WTC11 (cell line): ENCODE measurements at regions of chr15 and their contacts with region 1.

Region 1: GRCh38 chr15:66707310-66708082 is 5.5 kb downstream of the SMAD6 start:
- DNase-seq: peak; percentile 69
- ATAC-seq: peak; percentile 84
- H3K4me3 Mint-ChIP-seq: no peak overlapping the region
- H3K27ac Mint-ChIP-seq: no peak overlapping the region
- H3K4me1 Mint-ChIP-seq: peaks cover 34% of the 10 kb centered on the region
- H3K27me3 Mint-ChIP-seq: peaks cover 23% of the 10 kb centered on the region
- CTCF ChIP-seq: no peak

Region 2: DNA sequence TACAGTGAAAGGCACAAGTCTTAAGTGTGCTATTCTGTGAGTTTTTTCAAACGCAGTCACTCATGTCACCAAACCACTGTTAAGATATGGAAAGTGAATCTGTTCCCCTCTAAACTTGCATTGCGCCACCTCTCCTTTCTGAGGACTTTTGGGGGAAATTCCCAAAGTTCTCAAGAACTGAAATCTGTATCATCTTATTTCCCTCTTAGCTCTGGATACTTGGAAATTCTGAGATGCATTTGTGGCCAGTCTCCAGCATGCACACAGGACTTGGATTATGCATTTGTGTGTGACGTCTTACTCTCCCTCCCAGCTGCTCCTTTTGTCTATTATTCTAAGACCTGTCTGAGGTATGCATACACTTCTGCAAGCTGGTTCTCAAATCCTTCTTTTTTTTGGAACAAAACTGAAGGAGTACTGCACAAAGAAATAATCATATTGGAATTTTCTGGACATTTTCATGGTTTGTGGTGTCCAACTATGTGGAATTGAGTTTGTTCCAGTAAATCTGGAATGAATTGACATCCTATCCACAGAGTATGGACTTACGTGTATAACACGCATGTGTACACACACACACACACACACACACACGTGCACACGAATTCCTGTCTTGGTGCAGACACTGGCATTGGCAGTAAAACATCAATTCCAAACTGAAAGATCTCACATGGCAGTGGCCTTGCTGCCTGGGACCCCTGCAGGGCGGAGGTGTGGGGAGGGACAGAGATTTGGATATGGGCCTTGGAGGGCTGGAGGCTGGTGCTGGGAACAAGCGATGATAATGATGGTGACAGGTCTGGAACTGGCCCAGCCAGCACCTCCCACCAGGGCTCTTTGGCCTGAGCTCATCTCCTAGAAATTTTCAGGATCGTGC is 133.5 kb before region 1 on chr15:
- CTCF ChIA-PET with region 1: no interaction called
- POLR2A ChIA-PET with region 1: no interaction called
- DNase-seq: no peak
- ATAC-seq: no peak
- H3K4me3 Mint-ChIP-seq: no peak overlapping the region
- H3K27ac Mint-ChIP-seq: no peak overlapping the region
- H3K4me1 Mint-ChIP-seq: no peaks in the 10 kb centered on the region
- H3K27me3 Mint-ChIP-seq: no peaks in the 10 kb centered on the region
- CTCF ChIP-seq: no peak

Region 3: DNA sequence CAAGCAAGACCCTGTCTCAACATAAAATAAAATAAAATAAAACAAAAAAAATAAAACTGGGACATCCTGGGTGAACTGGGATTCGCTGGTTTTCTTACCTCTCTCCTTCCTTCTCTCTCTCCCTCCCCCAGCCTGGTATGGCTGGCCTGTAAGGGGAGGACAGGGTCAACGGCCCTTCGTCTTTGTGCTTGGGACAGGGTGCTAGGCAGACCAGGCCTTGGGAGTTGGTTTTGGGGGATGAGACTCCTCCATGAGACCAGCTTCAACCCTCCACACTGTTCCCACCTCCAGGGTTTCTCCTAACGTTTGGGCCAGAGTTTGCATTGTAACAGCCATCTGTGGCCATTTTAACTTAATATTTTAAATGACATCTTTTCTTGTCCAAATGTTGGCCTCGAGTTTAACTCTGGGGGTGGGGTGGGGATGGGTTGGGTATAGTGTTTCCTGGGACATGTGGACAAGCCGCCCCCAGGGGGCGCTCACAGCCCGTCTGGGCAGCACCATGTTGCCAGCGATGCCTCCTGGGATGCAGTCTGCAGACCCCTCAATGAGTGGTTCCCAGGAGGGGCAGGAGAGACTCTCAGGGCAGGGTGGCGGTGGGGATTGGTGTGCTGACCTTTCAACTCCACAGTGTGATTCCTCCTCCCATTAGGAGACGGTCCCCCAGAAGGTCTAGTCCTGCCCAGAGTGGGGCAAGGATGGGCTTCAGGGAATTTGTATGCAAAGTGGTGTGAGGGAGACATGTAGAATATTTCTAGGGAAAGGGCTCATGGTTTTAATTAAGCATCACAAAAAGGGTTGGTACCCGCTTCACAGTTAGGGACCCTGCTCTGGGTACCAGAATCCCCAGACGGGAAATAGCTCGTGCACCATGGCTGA is 104.0 kb before region 1 on chr15:
- CTCF ChIA-PET with region 1: interaction called, 10 read pairs
- POLR2A ChIA-PET with region 1: interaction called, 3 read pairs
- DNase-seq: peak; percentile 82
- ATAC-seq: peak; percentile 95
- H3K4me3 Mint-ChIP-seq: no peak overlapping the region
- H3K27ac Mint-ChIP-seq: no peak overlapping the region; the same call in 1 of the 2 replicates
- H3K4me1 Mint-ChIP-seq: no peaks in the 10 kb centered on the region
- H3K27me3 Mint-ChIP-seq: no peaks in the 10 kb centered on the region
- CTCF ChIP-seq: peak; percentile 95

Region 4: GRCh38 chr15:66654739-66655375 is 52.6 kb before region 1 on chr15:
- CTCF ChIA-PET with region 1: no interaction called
- POLR2A ChIA-PET with region 1: no interaction called
- DNase-seq: no peak
- ATAC-seq: peak; percentile 25
- H3K4me3 Mint-ChIP-seq: peak overlapping the region; percentile 33; the same call in 1 of the 2 replicates
- H3K27ac Mint-ChIP-seq: no peak overlapping the region
- H3K4me1 Mint-ChIP-seq: peaks cover 45% of the 10 kb centered on the region
- H3K27me3 Mint-ChIP-seq: peaks cover 3% of the 10 kb centered on the region; the same call in 1 of the 2 replicates
- CTCF ChIP-seq: no peak

Region 5: DNA sequence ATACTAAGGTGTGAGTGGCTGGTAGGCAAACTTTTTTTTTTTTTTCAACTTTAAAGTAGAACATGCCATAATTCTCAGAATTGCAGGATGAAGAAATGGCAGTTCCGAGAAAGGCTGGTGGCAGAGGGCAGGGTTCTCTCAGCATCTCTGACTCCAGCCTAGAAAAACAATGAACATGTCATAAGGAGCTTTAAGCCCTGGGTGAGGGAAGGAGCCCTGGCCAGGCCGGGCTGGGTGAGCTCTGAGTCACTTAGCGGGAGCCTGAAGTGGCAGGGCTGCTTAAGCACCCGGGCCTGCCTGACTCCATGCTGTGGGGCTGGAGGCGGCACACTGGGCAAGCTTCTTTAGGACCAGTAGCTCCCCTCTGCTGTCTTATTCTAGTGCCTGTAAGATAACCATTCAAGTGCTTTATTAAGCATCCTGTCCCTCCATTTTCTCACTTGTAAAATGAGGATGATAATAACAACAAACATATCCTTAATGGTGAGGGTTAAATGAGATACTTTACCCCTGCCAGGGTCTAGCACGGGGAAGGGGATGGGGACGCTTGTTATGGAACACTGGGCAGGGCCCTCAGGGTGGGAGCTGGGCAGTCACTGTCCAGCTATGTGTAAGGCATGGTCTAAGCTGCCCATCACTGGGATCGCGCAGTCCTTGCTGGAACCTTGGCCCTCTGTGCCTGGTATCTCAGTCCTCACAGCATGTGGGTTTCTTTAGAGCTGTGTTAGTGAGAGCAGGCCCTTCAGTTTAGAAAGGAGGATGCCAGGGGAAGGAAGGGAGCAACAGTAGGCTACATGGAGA is 12.9 kb after region 1 on chr15:
- CTCF ChIA-PET with region 1: interaction called, 22 read pairs
- POLR2A ChIA-PET with region 1: no interaction called
- DNase-seq: no peak
- ATAC-seq: no peak
- H3K4me3 Mint-ChIP-seq: no peak overlapping the region
- H3K27ac Mint-ChIP-seq: no peak overlapping the region
- H3K4me1 Mint-ChIP-seq: peaks cover 9% of the 10 kb centered on the region
- H3K27me3 Mint-ChIP-seq: no peaks in the 10 kb centered on the region
- CTCF ChIP-seq: no peak

Region 6: GRCh38 chr15:66774001-66774814 is 66.7 kb after region 1 on chr15:
- CTCF ChIA-PET with region 1: interaction called, 53 read pairs
- POLR2A ChIA-PET with region 1: interaction called, 3 read pairs
- DNase-seq: peak; percentile 92
- ATAC-seq: peak; percentile 86
- H3K4me3 Mint-ChIP-seq: no peak overlapping the region
- H3K27ac Mint-ChIP-seq: peak overlapping the region; percentile 83
- H3K4me1 Mint-ChIP-seq: peaks cover 47% of the 10 kb centered on the region
- H3K27me3 Mint-ChIP-seq: no peaks in the 10 kb centered on the region
- CTCF ChIP-seq: peak; percentile 99

Region 7: GRCh38 chr15:66832664-66833063 is 125.2 kb after region 1 on chr15:
- CTCF ChIA-PET with region 1: interaction called, 10 read pairs
- POLR2A ChIA-PET with region 1: no interaction called
- DNase-seq: no peak
- ATAC-seq: no peak
- H3K4me3 Mint-ChIP-seq: no peak overlapping the region
- H3K27ac Mint-ChIP-seq: no peak overlapping the region
- H3K4me1 Mint-ChIP-seq: peaks cover 52% of the 10 kb centered on the region
- H3K27me3 Mint-ChIP-seq: peaks cover 16% of the 10 kb centered on the region
- CTCF ChIP-seq: no peak